PC-9 (cell line): ENCODE measurements at regions of chr1 and their contacts with region 1.

Region 1: DNA sequence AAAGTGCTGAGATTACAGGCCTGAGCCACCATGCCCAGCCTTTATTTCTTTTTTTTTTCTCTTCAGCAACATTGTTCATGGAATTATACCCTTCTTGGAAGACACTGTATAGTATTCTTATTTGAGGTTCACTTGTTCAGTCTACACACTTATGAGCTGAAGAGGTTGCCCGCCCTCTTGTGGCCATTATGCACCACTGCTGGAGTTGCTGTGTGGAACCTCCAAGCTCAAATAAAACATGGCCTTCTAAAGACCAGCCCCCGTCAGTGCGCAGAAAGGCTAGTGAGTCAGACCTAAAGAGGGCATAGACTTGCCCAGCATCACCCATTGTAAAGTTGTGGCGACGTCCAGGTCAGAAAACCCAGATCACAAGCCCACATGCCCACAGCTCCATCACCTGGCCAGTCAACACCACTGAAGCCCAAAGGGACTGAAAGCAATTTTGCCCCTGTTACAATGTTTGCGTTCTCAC is 20.4 kb downstream of the LURAP1 start:
- DNase-seq: peak; percentile 81 to 87
- H3K4me3 ChIP-seq: no peak overlapping the region
- H3K27ac ChIP-seq: no peak overlapping the region
- H3K4me1 ChIP-seq: peaks cover 5% of the 10 kb centered on the region
- H3K27me3 ChIP-seq: no peaks in the 10 kb centered on the region
- CTCF ChIP-seq: peak; percentile 97

Region 2: DNA sequence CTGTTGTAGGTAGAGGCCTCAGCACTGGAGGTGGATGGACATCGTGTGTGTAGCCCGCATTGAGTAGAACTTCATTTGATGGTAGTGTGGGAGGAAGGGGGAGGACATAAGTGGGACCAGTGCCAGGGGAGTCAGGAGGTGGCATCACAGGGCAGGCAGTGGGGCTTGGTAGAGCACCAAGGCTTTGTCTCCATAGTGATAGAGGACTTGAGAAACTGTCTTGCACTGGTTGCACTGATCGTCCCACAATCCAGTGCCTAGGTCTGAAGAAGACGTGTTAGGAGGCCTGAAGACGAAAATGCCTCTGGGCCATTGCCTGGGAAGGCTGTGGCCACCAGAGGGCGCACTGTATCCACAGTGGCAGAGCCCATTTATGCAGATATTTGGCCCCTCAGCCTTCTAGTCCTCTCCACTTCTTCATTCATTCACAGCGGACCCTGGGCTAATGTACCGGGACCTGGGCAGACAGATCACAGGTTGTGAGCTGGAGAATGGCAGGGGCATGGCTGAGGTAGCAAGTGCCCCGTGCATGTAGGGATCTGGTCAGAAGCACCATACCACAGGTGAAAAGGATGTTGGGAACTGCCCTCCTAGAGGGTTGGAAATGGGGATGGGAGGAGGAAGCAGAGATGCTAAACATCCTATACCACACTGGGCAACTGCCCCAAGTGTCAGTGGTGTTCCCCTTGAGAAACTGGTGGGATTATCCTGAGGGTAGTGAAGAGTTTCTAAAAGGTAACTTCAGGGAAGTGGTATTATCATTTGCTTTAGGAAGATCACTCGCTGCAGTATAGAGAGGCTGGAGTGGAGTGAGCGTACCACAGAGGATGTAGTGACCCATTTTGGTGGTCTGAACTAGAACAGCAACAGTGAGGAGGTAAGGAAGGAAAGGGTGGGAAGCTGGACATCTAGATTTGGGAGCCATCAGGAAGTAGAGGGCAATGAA is 186.3 kb before region 1 on chr1:
- CTCF ChIA-PET with region 1: interaction called, 3 read pairs
- POLR2A ChIA-PET with region 1: interaction called, 5 read pairs
- intact Hi-C with region 1: loop called (anchors 1 kb)
- DNase-seq: peak; percentile 66 to 87
- H3K4me3 ChIP-seq: no peak overlapping the region
- H3K27ac ChIP-seq: no peak overlapping the region; the same call in 1 of the 2 replicates
- H3K4me1 ChIP-seq: peaks cover 24% of the 10 kb centered on the region
- H3K27me3 ChIP-seq: no peaks in the 10 kb centered on the region
- CTCF ChIP-seq: peak; percentile 97

Region 3: DNA sequence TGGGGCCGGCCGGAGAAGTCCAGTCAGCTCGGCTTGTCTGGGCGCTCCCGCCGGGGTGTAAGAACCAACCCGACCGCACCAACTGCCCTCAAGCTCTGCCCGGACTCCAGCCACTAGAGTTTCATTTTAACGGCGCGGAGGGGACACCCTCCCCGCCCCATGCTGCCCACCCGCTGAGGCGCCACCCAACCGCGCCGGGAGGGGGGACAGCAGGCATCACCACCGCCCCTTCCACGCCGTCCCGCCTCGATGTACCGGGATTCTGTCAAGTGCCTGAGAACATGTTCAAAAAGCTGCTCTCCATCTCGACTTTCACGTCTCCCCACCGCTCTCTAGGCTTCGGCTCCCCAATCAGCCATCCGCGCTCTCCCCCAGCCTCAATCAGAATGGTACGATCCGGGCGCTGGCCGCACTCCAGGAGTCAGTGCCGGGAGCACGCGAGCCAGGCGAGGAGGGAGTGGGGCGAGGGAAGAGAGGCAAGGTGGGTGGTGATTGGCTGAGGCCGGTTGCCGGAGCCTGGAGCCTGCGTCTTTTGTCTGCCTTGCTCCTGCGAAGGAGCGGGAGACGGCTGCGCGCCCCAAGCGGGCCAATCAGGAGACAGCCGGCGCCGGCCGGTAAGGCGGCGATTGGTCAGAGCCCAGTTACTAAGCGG is 90.9 kb before region 1 on chr1 and contains the start of gene PIK3R3:
- CTCF ChIA-PET with region 1: interaction called, 3 read pairs
- POLR2A ChIA-PET with region 1: no interaction called
- intact Hi-C with region 1: loop called (anchors 1 kb)
- DNase-seq: peak; percentile 95 to 99
- H3K4me3 ChIP-seq: peak within 1 kb of the TSS; percentile 95
- H3K27ac ChIP-seq: peak within 1 kb of the TSS; percentile 98
- H3K4me1 ChIP-seq: peaks cover 60% of the 10 kb centered on the region
- H3K27me3 ChIP-seq: no peaks in the 10 kb centered on the region
- CTCF ChIP-seq: no peak
- total RNA-seq, gene PIK3R3: 19.6 and 44.2 TPM in 2 replicates

Region 4: DNA sequence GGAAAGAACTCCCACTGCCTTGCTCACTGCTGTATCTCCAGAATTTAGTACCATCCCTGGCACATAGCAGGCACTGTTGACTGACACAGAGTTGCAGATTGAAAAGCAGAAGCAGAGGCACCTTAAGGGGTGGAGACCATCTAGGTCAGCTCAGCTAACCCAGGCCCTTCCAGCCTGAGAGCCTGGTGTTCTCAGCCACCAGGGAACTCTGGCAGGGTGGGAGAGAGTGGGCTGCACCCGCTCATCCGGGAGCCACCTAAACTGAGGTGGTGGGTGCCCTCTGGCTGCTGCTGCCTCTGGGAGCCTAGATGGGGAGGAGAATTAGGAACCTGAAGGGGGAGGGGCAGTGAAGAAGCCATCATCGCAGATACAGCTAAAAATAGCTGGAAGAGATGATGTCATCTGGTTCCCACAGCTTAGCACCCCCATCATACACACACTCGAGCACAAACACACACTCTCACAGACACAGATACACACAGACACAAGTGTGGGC is 50.1 kb before region 1 on chr1:
- CTCF ChIA-PET with region 1: interaction called, 11 read pairs
- POLR2A ChIA-PET with region 1: no interaction called
- intact Hi-C with region 1: no loop called
- DNase-seq: no peak
- H3K4me3 ChIP-seq: no peak overlapping the region
- H3K27ac ChIP-seq: peak overlapping the region; percentile 99
- H3K4me1 ChIP-seq: peaks cover 86% of the 10 kb centered on the region
- H3K27me3 ChIP-seq: no peaks in the 10 kb centered on the region
- CTCF ChIP-seq: no peak

Region 5: DNA sequence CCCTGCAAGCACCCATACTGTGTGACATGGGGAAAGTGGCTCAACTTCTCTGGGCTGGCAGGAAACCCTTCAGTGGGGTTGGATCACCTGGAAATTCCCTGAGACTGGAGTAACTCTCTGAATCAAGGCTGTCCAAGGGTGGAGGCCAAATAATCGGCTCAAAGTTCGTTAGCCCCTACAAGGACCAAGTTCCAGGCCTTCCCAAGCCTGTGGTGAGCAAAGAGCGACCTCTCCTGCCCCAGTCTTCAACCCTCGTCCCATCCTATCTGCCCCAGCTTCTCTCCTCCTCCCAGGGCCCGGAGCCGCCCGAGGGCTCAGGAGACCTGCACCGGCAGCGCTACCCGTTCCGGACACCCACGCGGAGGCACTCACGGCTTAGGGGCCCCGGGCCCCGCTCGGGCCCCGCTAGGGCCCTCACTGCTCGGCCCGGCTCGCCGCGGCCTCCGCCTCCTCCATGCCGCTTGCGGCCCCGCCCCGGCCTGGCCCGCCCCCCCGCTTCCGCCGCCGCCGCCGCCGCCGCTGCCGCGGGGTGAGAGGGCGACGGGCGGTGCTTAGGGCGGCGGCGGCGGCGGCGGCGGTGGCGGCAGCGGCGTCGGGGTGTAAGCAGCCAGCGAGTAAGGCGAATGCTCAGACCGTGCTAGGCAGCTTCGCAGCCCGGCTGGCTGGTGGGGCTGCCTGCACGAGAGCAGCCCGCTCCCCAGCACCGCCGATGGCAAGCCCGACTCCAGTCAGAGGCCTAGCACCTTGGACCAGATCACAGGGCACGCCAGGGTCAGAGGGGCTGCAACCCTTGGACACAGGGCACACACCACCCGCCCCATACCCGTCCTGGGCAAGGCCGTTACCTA is 25.3 kb before region 1 on chr1 and contains the start of gene POMGNT1:
- CTCF ChIA-PET with region 1: interaction called, 11 read pairs
- POLR2A ChIA-PET with region 1: no interaction called
- intact Hi-C with region 1: loop called (anchors 1 kb)
- DNase-seq: peak in 1 of 2 experiments; percentile 83
- H3K4me3 ChIP-seq: peak within 1 kb of the TSS; percentile 87
- H3K27ac ChIP-seq: peak within 1 kb of the TSS; percentile 43
- H3K4me1 ChIP-seq: peaks cover 14% of the 10 kb centered on the region
- H3K27me3 ChIP-seq: no peaks in the 10 kb centered on the region
- CTCF ChIP-seq: no peak
- total RNA-seq, gene POMGNT1: 82.6 and 97.4 TPM in 2 replicates